A549 (cell line): ENCODE measurements at regions of chr12 and their contacts with region 1.

Region 1: GRCh38 chr12:52390739-52391617 is 5.5 kb upstream of the KRT84 start:
- DNase-seq: peak; percentile 58 to 62
- ATAC-seq: peak; percentile 69 to 87
- H3K4me3 ChIP-seq: no peak overlapping the region
- H3K27ac ChIP-seq: peak overlapping the region; percentile 33 to 72; a peak in 5 of 6 replicates
- H3K4me1 ChIP-seq: peaks cover 24% of the 10 kb centered on the region
- CTCF ChIP-seq: peak; percentile 61
- EP300 ChIP-seq: no peak
- POLR2A ChIP-seq: no peak
- RAD21 ChIP-seq: peak; percentile 78 to 80

Region 2: GRCh38 chr12:52380271-52380694 is 10.7 kb before region 1 on chr12:
- CTCF ChIA-PET with region 1: interaction called, 29 read pairs
- POLR2A ChIA-PET with region 1: no interaction called
- DNase-seq: peak; percentile 52 to 66
- ATAC-seq: peak; percentile 65 to 92; a peak in 5 of 6 replicates
- H3K4me3 ChIP-seq: no peak overlapping the region
- H3K27ac ChIP-seq: no peak overlapping the region
- H3K4me1 ChIP-seq: no peaks in the 10 kb centered on the region
- CTCF ChIP-seq: peak; percentile 53
- EP300 ChIP-seq: no peak
- POLR2A ChIP-seq: no peak
- RAD21 ChIP-seq: peak; percentile 52 to 65; a peak in 3 of 5 replicates

Region 3: DNA sequence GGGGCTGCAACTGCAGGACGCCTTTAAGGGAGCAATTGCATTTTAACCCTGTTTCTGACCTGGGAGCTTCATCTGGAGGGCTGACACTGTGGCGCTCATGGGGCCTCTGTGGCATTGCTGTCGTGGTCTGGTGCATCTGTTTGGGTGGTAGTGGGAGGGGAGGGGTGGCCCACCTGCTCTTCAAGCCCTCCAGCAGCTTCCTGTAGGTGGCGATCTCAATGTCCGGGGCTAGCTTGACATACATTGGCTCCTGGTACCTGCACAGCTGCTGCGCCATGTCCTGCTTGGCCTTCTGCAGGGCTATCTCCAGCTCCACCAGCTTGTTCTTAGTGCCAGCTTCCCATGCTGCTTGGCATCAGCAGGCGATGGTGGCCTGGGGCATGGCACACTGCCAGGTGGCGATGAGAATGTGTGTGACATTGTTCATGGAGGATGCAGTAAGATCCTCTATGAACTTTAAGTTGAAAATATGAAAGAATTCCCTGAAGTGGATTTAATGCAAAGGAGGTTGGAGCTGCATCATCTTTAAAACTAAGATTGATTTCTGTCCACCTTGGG is 22.9 kb after region 1 on chr12:
- CTCF ChIA-PET with region 1: interaction called, 16 read pairs
- POLR2A ChIA-PET with region 1: no interaction called
- DNase-seq: no peak
- ATAC-seq: peak in 1 of 2 experiments; percentile 40; a peak in 2 of 6 replicates
- H3K4me3 ChIP-seq: no peak overlapping the region
- H3K27ac ChIP-seq: peak overlapping the region in 1 of 2 experiments; percentile 37; a peak in 1 of 6 replicates
- H3K4me1 ChIP-seq: peaks cover 29% of the 10 kb centered on the region
- CTCF ChIP-seq: no peak
- EP300 ChIP-seq: no peak
- POLR2A ChIP-seq: no peak
- RAD21 ChIP-seq: no peak

Region 4: GRCh38 chr12:52515927-52516831 is 125.2 kb after region 1 on chr12:
- CTCF ChIA-PET with region 1: interaction called, 10 read pairs
- POLR2A ChIA-PET with region 1: no interaction called
- DNase-seq: no peak
- ATAC-seq: no peak
- H3K4me3 ChIP-seq: no peak overlapping the region
- H3K27ac ChIP-seq: no peak overlapping the region
- H3K4me1 ChIP-seq: peaks cover 4% of the 10 kb centered on the region
- CTCF ChIP-seq: no peak
- EP300 ChIP-seq: no peak
- POLR2A ChIP-seq: no peak
- RAD21 ChIP-seq: no peak

Region 5: GRCh38 chr12:52582971-52583456 is 192.0 kb after region 1 on chr12:
- CTCF ChIA-PET with region 1: interaction called, 16 read pairs
- POLR2A ChIA-PET with region 1: no interaction called
- DNase-seq: peak; percentile 74 to 88
- ATAC-seq: peak; percentile 87 to 96
- H3K4me3 ChIP-seq: no peak overlapping the region
- H3K27ac ChIP-seq: peak overlapping the region; percentile 43 to 82
- H3K4me1 ChIP-seq: peaks cover 24% of the 10 kb centered on the region
- CTCF ChIP-seq: peak; percentile 85
- EP300 ChIP-seq: no peak
- POLR2A ChIP-seq: no peak
- RAD21 ChIP-seq: peak; percentile 94 to 97